ENCODE measurements at regions of chr21 and their contacts with region 1.

Region 1: DNA sequence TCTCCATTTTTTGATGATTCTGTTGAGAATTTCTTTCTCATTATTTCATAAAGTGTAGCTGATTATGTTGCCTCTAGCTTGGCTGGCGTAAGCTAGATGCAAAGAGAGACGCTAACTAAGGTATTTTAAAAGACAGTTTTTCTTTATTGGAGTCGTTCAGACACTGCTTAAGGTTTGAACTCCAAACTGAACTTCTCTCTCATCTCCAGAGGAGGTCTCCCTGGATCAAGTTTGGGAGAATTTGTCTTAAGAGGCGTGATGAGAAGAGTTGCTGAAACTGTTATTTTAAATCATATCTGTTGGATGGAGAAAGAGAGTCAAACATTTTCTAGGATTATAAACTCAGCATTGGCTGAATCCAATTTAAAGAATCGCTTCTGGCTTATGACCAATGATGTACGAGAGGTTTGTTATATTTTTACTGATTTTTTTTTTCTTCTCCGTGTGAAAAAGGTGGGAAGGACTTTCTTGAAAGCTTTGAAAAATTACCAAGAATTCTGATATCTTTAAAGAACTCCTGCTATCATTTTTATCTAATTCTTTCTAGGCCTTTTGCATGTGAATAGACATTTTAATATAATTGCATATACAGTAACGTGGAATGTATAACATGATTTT is 34.0 kb downstream of the MAP3K7CL start:
- DNase-seq: no peak
- ATAC-seq: peak; percentile 65; the same call in 1 of the 2 replicates
- H3K4me3 Mint-ChIP-seq: no peak overlapping the region
- H3K27ac Mint-ChIP-seq: no peak overlapping the region
- H3K4me1 Mint-ChIP-seq: no peaks in the 10 kb centered on the region
- H3K27me3 Mint-ChIP-seq: no peaks in the 10 kb centered on the region
- CTCF ChIP-seq: no peak

Region 2: GRCh38 chr21:29343519-29343918 is 179.1 kb after region 1 on chr21:
- CTCF ChIA-PET with region 1: interaction called, 15 read pairs
- POLR2A ChIA-PET with region 1: interaction called, 4 read pairs
- DNase-seq: no peak
- ATAC-seq: no peak
- H3K4me3 Mint-ChIP-seq: no peak overlapping the region
- H3K27ac Mint-ChIP-seq: no peak overlapping the region
- H3K4me1 Mint-ChIP-seq: peaks cover 4% of the 10 kb centered on the region
- H3K27me3 Mint-ChIP-seq: no peaks in the 10 kb centered on the region
- CTCF ChIP-seq: no peak

Measured in WTC11 (cell line).